B cell (primary cell): ENCODE measurements at regions of chr7 and their contacts with region 1.

Region 1: GRCh38 chr7:18402488-18403183 is 92.9 kb upstream of the HDAC9 start:
- DNase-seq: no peak
- ATAC-seq: no peak
- H3K4me3 ChIP-seq: no peak overlapping the region
- H3K4me3 Mint-ChIP-seq: peak overlapping the region; percentile 75
- H3K27ac ChIP-seq: peak overlapping the region in 1 of 2 donors; percentile 33
- H3K27ac Mint-ChIP-seq: peak overlapping the region; percentile 80
- H3K4me1 ChIP-seq: peaks cover 34 to 43% of the 10 kb centered on the region in 2 donors
- H3K4me1 Mint-ChIP-seq: peaks cover 59% of the 10 kb centered on the region
- H3K27me3 ChIP-seq: no peaks in the 10 kb centered on the region
- H3K27me3 Mint-ChIP-seq: no peaks in the 10 kb centered on the region
- CTCF ChIP-seq: no peak

Region 2: GRCh38 chr7:18212758-18213157 is 189.9 kb before region 1 on chr7:
- CTCF ChIA-PET with region 1: no interaction called
- POLR2A ChIA-PET with region 1: no interaction called
- intact Hi-C with region 1: no loop called
- DNase-seq: no peak
- ATAC-seq: no peak
- H3K4me3 ChIP-seq: no peak overlapping the region
- H3K4me3 Mint-ChIP-seq: no peak overlapping the region
- H3K27ac ChIP-seq: no peak overlapping the region
- H3K27ac Mint-ChIP-seq: no peak overlapping the region
- H3K4me1 ChIP-seq: peaks cover 6 to 7% of the 10 kb centered on the region in 2 donors
- H3K4me1 Mint-ChIP-seq: peaks cover 10% of the 10 kb centered on the region
- H3K27me3 ChIP-seq: no peaks in the 10 kb centered on the region
- H3K27me3 Mint-ChIP-seq: peaks cover 3% of the 10 kb centered on the region
- CTCF ChIP-seq: no peak

Region 3: DNA sequence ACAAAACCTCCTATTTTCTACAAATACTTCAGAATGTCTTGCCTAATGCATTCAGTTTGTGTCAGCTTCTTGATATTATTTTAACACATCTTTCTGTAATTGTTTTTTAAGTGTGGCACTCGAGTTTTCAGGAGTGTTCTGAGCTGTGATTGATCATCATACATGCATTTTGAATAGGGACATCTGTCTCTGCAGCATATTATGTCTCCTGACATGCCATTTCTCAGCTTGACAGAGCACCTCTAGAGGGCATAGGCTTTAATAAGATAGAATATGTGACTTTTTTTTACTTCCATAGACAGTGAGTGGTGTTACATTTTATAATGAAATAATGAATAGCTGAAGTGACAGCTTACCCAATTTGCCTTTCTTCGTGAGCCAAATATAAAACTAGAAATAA is 126.3 kb before region 1 on chr7:
- CTCF ChIA-PET with region 1: no interaction called
- POLR2A ChIA-PET with region 1: no interaction called
- intact Hi-C with region 1: no loop called
- DNase-seq: no peak
- ATAC-seq: no peak
- H3K4me3 ChIP-seq: no peak overlapping the region
- H3K4me3 Mint-ChIP-seq: no peak overlapping the region
- H3K27ac ChIP-seq: no peak overlapping the region
- H3K27ac Mint-ChIP-seq: no peak overlapping the region
- H3K4me1 ChIP-seq: no peaks in the 10 kb centered on the region
- H3K4me1 Mint-ChIP-seq: peaks cover 2% of the 10 kb centered on the region
- H3K27me3 ChIP-seq: no peaks in the 10 kb centered on the region
- H3K27me3 Mint-ChIP-seq: no peaks in the 10 kb centered on the region
- CTCF ChIP-seq: no peak

Region 4: DNA sequence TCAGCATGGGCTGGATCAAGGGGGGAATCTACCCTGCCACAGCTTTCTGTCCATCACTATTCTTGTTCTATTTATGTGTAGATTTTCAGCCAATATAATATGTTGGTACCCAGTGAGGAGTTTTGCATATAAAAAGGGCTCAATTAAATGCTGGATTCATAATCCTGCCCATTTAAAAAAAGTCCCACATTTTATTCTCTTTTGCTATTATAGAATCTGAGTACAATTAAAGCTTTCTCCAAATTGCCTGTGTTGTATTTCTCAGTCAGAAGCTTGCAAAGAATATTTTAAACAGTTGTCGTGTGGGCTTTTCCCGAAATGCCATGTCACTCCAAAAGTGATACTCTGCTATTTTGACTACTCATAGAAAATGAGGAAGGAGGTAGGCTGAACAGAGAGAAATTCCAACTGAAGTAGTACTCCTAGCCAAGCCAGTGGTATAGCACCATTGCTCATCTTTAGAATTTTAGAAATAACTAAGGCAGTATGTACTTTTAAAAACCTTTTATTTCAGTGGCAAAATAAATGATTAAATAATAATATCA is 15.4 kb before region 1 on chr7:
- CTCF ChIA-PET with region 1: interaction called, 4 read pairs
- POLR2A ChIA-PET with region 1: no interaction called
- intact Hi-C with region 1: loop called (anchors 2 kb)
- DNase-seq: no peak
- ATAC-seq: no peak
- H3K4me3 ChIP-seq: no peak overlapping the region
- H3K4me3 Mint-ChIP-seq: no peak overlapping the region
- H3K27ac ChIP-seq: no peak overlapping the region
- H3K27ac Mint-ChIP-seq: peak overlapping the region; percentile 17
- H3K4me1 ChIP-seq: peaks cover 34 to 35% of the 10 kb centered on the region in 2 donors
- H3K4me1 Mint-ChIP-seq: peaks cover 48% of the 10 kb centered on the region
- H3K27me3 ChIP-seq: no peaks in the 10 kb centered on the region
- H3K27me3 Mint-ChIP-seq: no peaks in the 10 kb centered on the region
- CTCF ChIP-seq: no peak

Region 5: DNA sequence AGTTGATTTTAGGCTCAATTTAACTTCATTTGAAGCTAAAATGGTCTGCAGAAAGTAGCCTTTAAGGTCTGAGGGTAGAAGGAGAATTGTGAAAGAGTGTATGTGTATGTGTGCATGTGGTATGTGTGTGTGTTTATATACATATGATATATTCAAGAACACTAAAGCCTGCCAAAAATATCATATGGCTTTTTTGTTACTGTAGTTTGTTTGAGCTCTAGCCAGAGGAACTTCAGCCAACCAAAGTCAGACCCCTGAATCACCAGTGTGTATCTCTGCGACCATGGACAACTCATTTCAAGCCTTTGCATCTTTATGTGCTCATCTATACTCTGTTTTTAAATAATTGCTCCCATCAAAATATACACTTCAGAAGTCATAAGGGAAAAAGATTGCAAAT is 34.5 kb after region 1 on chr7:
- CTCF ChIA-PET with region 1: no interaction called
- POLR2A ChIA-PET with region 1: no interaction called
- intact Hi-C with region 1: loop called (anchors 5 kb)
- DNase-seq: no peak
- ATAC-seq: no peak
- H3K4me3 ChIP-seq: no peak overlapping the region
- H3K4me3 Mint-ChIP-seq: no peak overlapping the region
- H3K27ac ChIP-seq: no peak overlapping the region
- H3K27ac Mint-ChIP-seq: no peak overlapping the region
- H3K4me1 ChIP-seq: no peaks in the 10 kb centered on the region
- H3K4me1 Mint-ChIP-seq: peaks cover 14% of the 10 kb centered on the region
- H3K27me3 ChIP-seq: no peaks in the 10 kb centered on the region
- H3K27me3 Mint-ChIP-seq: no peaks in the 10 kb centered on the region
- CTCF ChIP-seq: no peak

Region 6: GRCh38 chr7:18577096-18577771 is 174.6 kb after region 1 on chr7:
- CTCF ChIA-PET with region 1: no interaction called
- POLR2A ChIA-PET with region 1: no interaction called
- intact Hi-C with region 1: loop called (anchors 5 kb)
- DNase-seq: peak; percentile 23
- ATAC-seq: no peak
- H3K4me3 ChIP-seq: no peak overlapping the region
- H3K4me3 Mint-ChIP-seq: peak overlapping the region; percentile 47
- H3K27ac ChIP-seq: peak overlapping the region in 1 of 2 donors; percentile 59
- H3K27ac Mint-ChIP-seq: peak overlapping the region; percentile 62
- H3K4me1 ChIP-seq: peaks cover 38 to 43% of the 10 kb centered on the region in 2 donors
- H3K4me1 Mint-ChIP-seq: peaks cover 70% of the 10 kb centered on the region
- H3K27me3 ChIP-seq: no peaks in the 10 kb centered on the region
- H3K27me3 Mint-ChIP-seq: no peaks in the 10 kb centered on the region
- CTCF ChIP-seq: no peak

Region 7: GRCh38 chr7:19104811-19105210 is 702.2 kb after region 1 on chr7:
- CTCF ChIA-PET with region 1: no interaction called
- POLR2A ChIA-PET with region 1: no interaction called
- intact Hi-C with region 1: no loop called
- DNase-seq: no peak
- ATAC-seq: no peak
- H3K4me3 ChIP-seq: no peak overlapping the region
- H3K4me3 Mint-ChIP-seq: no peak overlapping the region
- H3K27ac ChIP-seq: no peak overlapping the region
- H3K27ac Mint-ChIP-seq: no peak overlapping the region
- H3K4me1 ChIP-seq: peaks cover 22 to 33% of the 10 kb centered on the region in 2 donors
- H3K4me1 Mint-ChIP-seq: peaks cover 26% of the 10 kb centered on the region
- H3K27me3 ChIP-seq: peaks cover 0 to 64% (median 52%) of the 10 kb centered on the region in 4 experiments
- H3K27me3 Mint-ChIP-seq: peaks cover 77% of the 10 kb centered on the region
- CTCF ChIP-seq: no peak